MCF 10A (cell line): ENCODE measurements at regions of chr18 and their contacts with region 1.

Region 1: DNA sequence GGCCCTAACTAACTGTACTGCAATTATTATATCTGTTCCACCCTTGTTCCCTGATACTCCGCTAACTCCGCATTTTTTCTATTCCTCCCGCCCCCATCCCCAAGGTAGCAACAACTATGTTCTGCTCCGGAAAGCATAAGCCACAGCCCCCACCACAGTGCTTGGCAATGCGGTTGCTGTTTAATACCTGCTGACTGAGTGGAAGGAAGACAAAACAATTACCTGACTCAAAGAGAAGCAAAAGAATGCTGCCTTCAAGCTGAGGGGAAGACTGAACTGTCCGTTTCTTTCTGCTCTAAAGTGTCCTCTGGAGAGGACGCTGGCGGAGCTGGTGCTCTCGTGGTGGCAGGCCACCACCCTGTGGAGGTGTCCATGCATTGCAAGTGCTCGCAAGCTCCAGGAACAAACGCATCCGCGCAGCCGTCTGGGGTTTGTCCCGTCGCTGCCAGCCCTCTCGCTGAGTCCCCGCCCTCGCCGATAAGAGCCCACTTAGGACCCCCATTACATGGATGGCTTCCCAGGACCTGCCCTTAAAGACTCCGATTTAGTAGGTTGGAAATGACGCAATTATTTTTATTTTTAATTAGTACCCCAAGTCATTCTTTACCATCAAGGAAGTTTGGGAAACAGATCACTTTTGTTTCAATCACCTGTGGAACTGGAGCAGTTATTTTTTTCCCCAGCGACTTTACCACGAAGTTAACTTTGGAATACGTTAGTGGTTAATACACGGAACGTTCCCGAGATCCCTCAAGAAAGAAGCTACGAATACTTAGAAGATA is 1.6 kb upstream of the MYL12A start:
- DNase-seq: peak; percentile 89
- H3K4me3 Mint-ChIP-seq: peak overlapping the region; percentile 86
- H3K27ac Mint-ChIP-seq: peak overlapping the region; percentile 100
- H3K4me1 Mint-ChIP-seq: peaks cover 22% of the 10 kb centered on the region
- H3K27me3 Mint-ChIP-seq: no peaks in the 10 kb centered on the region
- CTCF ChIP-seq: peak; percentile 97

Region 2: DNA sequence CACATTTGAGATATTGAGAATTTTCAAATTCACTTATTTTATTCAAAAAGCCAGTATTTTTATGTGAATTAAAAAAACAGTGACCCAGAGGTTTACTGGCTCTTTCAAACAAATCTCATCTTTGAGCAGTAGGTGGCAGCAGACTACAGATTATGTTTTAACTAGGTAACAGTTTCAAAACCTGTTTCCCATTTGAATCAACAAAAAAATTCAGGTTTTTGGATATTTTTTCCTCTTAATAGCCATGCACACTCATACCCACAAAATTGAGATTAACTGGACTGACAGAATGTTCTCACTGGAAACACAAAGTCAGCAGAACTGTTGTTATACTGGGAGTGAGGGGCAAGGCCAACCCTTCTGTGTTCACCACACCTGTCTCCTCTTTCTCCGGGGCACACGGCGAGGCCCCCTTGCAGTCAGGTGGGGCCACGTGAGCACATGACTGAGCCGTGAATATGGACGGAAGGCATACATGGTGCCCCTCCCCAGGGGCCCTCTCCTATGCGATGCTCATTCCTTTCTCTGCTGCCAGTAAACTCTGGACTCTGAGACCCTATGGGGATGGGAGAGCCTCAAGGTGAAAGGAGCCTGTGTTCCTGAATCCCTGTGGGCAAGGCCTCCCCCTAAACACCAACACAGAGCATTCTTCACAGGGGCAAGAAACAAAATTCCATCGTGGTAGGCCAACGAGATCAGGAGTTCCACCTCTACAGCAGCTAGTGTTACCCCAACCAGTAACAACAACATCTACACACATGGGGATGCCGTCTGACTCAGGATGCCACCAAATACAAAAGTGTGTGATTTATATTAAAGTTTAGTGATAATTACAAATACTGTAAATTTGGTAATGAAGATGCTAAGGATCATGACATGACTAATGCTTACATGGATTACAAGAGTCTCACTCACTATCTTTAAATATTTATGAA is 313.5 kb before region 1 on chr18:
- CTCF ChIA-PET with region 1: interaction called, 103 read pairs
- POLR2A ChIA-PET with region 1: interaction called, 35 read pairs
- intact Hi-C with region 1: loop called (anchors 1 kb)
- DNase-seq: peak; percentile 71
- H3K4me3 Mint-ChIP-seq: no peak overlapping the region
- H3K27ac Mint-ChIP-seq: no peak overlapping the region
- H3K4me1 Mint-ChIP-seq: peaks cover 10% of the 10 kb centered on the region
- H3K27me3 Mint-ChIP-seq: no peaks in the 10 kb centered on the region
- CTCF ChIP-seq: peak; percentile 69

Region 3: GRCh38 chr18:2985628-2986027 is 260.4 kb before region 1 on chr18:
- CTCF ChIA-PET with region 1: interaction called, 22 read pairs
- POLR2A ChIA-PET with region 1: interaction called, 19 read pairs
- intact Hi-C with region 1: no loop called
- DNase-seq: peak; percentile 52
- H3K4me3 Mint-ChIP-seq: no peak overlapping the region
- H3K27ac Mint-ChIP-seq: no peak overlapping the region
- H3K4me1 Mint-ChIP-seq: peaks cover 35% of the 10 kb centered on the region
- H3K27me3 Mint-ChIP-seq: no peaks in the 10 kb centered on the region
- CTCF ChIP-seq: peak; percentile 37

Region 4: GRCh38 chr18:3117493-3118192 is 128.4 kb before region 1 on chr18:
- CTCF ChIA-PET with region 1: no interaction called
- POLR2A ChIA-PET with region 1: interaction called, 30 read pairs
- intact Hi-C with region 1: loop called (anchors 1 kb)
- DNase-seq: peak; percentile 92
- H3K4me3 Mint-ChIP-seq: no peak overlapping the region
- H3K27ac Mint-ChIP-seq: peak overlapping the region; percentile 83
- H3K4me1 Mint-ChIP-seq: peaks cover 28% of the 10 kb centered on the region
- H3K27me3 Mint-ChIP-seq: no peaks in the 10 kb centered on the region
- CTCF ChIP-seq: no peak

Region 5: GRCh38 chr18:3261371-3262246 is 15.6 kb after region 1 on chr18 and contains the start of gene MYL12B:
- CTCF ChIA-PET with region 1: interaction called, 6 read pairs
- POLR2A ChIA-PET with region 1: interaction called, 250 read pairs
- intact Hi-C with region 1: no loop called
- DNase-seq: peak; percentile 78
- H3K4me3 Mint-ChIP-seq: peak within 1 kb of the TSS; percentile 80
- H3K27ac Mint-ChIP-seq: peak within 1 kb of the TSS; percentile 82
- H3K4me1 Mint-ChIP-seq: peaks cover 43% of the 10 kb centered on the region
- H3K27me3 Mint-ChIP-seq: no peaks in the 10 kb centered on the region
- CTCF ChIP-seq: no peak
- total RNA-seq, gene MYL12B: 175 and 229 TPM in 2 replicates

Region 6: GRCh38 chr18:3665780-3666525 is 419.9 kb after region 1 on chr18:
- CTCF ChIA-PET with region 1: interaction called, 7 read pairs
- POLR2A ChIA-PET with region 1: interaction called, 12 read pairs
- intact Hi-C with region 1: no loop called
- DNase-seq: peak; percentile 91
- H3K4me3 Mint-ChIP-seq: no peak overlapping the region
- H3K27ac Mint-ChIP-seq: peak overlapping the region; percentile 72
- H3K4me1 Mint-ChIP-seq: peaks cover 15% of the 10 kb centered on the region
- H3K27me3 Mint-ChIP-seq: no peaks in the 10 kb centered on the region
- CTCF ChIP-seq: peak; percentile 91